Activated CD4-positive, alpha-beta memory T cell treated with anti-CD3 and anti-CD28 coated beads, Interleukin-2, amount 10 ng/mL, durations not matched to agents 7 days and 5 days (primary cell): ENCODE measurements at regions of chr9 and their contacts with region 1.

Region 1: GRCh38 chr9:127734747-127735529 is at the start of gene TOR2A:
- DNase-seq: peak; percentile 98
- H3K4me3 Mint-ChIP-seq: peak within 1 kb of the TSS; percentile 79
- H3K27ac Mint-ChIP-seq: peak within 1 kb of the TSS; percentile 82
- H3K4me1 Mint-ChIP-seq: peaks cover 23% of the 10 kb centered on the region
- H3K27me3 Mint-ChIP-seq: no peaks in the 10 kb centered on the region
- total RNA-seq, gene TOR2A: 20.6 to 23.3 TPM

Region 2: DNA sequence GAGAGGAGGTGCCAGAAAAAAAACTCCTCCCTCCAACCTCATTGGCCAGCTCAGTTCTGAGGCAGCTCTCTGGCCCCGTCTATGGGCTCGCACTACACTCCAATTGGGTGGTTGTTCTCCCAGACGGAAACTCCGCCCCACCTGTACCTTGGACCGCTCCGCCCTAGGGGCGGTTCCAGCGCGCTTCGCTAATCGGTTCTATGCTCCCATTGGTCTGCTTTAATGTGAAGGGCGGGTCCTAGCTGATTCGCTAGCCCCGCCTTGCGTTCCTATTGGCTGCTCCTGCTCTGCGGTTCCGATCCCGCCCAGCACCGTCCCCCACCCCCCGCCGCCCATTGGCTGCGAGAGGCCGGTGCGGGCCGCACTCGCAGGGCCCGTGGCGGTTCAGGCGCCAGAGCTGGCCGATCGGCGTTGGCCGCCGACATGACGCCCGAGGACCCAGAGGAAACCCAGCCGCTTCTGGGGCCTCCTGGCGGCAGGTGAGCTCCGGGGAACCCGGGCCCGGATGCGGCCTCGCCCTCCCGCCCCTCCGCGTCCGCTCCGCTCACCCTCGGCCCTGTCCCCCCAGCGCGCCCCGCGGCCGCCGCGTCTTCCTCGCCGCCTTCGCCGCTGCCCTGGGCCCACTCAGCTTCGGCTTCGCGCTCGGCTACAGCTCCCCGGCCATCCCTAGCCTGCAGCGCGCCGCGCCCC is 338.0 kb before region 1 on chr9 and contains the start of gene SLC2A8:
- CTCF ChIA-PET with region 1: interaction called, 11 read pairs
- POLR2A ChIA-PET with region 1: no interaction called
- DNase-seq: peak; percentile 98
- H3K4me3 Mint-ChIP-seq: peak within 1 kb of the TSS; percentile 67
- H3K27ac Mint-ChIP-seq: no peak within 1 kb of the TSS
- H3K4me1 Mint-ChIP-seq: peaks cover 18% of the 10 kb centered on the region
- H3K27me3 Mint-ChIP-seq: peaks cover 37% of the 10 kb centered on the region
- total RNA-seq, gene SLC2A8: 7.5 to 7.7 TPM

Region 3: DNA sequence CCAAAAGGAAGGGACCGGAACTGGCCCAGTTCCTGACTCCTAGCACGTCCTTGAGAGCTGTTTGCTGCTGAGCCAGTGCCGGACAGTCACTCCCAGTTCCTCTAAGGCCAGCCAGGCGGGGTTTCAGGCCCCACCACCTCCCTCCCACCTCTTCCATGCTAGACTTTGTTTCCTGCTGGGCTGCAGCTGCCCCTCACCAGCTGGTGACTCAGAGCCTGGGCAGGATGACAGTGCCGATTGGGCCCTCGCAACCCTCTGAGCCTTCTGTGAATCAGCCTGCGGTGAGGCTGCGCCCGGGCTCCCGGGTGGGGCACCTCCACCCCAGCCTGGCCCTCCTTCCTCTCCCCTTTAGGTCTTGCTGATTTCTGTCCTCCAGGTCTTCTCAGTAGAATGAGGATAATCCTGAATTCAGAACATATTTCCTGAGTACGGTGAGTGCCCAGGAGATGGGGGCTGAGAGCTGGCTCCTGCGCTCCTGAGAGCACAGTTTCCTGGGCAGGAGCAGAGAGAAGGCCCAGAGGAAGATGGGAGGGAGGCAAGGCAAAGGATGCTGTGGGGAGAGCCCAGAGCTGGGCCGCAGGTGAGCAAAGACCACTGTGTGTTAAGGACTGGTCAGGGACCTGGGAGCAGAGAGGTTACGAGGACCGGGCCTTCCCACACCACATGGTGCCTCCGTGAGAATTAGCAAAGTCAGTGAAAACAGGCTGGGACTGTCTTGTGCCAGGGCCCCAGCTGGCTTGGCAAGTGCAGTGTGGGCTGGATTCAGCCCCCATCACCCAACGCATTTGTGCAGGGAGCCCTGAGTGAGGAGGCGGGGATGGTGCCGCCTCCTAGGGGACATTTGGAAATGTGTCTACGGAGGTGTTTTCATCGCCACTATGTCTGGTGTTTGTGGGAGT is 155.7 kb before region 1 on chr9:
- CTCF ChIA-PET with region 1: interaction called, 11 read pairs
- POLR2A ChIA-PET with region 1: no interaction called
- DNase-seq: peak; percentile 88
- H3K4me3 Mint-ChIP-seq: peak overlapping the region; percentile 82
- H3K27ac Mint-ChIP-seq: peak overlapping the region; percentile 92
- H3K4me1 Mint-ChIP-seq: peaks cover 65% of the 10 kb centered on the region
- H3K27me3 Mint-ChIP-seq: no peaks in the 10 kb centered on the region

Region 4: DNA sequence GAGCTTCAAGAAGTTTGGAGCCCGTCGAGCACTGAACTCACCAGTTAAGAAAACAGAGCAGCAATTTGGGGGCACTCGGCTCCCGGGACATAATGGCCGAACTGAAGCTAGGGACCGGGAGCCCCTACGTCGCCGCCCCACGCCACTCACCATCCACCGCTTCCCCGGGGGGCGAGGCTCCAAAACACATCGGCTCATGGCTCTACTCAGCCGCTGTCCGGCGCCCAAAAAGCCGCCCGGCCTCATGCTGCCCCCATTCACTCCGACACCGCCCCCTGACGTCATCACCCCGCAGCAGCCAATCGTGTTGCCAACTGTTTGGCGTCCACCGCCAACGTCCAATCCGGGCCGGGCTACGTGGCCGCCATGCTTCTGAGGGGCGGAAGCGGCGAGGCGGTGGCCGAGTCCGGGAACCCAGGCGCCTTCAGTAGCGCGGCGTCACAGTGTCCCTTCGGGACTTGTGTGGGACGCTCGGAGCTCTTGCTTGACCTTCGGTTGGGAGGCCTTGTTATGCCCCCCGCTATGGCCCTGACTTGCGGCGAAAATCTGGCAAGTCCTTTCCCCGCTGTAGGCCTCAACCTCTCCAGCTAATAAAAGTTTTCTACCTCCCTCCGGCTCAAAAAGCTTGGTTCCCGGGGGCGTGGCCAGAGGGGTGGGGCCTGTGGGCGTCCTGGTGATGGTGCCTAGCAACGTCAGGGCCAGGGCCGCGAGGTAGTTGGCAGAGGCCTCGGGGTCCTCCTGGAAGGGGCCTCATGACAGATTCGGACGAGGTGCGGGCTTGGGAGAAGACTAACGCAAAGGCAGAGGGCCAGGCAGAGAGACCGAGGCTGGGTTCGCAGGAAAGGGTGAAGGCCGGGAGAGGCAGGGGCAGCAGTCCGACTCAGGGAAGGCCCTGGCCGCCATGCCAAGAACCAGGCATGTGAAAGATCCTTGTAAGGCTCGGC is 19.3 kb before region 1 on chr9 and contains the starts of genes PTRH1 and TTC16:
- CTCF ChIA-PET with region 1: interaction called, 28 read pairs
- POLR2A ChIA-PET with region 1: interaction called, 23 read pairs
- DNase-seq: peak; percentile 97
- H3K4me3 Mint-ChIP-seq: peak within 1 kb of the TSS; percentile 99
- H3K27ac Mint-ChIP-seq: peak within 1 kb of the TSS; percentile 90
- H3K4me1 Mint-ChIP-seq: peaks cover 42% of the 10 kb centered on the region
- H3K27me3 Mint-ChIP-seq: no peaks in the 10 kb centered on the region
- total RNA-seq, gene PTRH1: 10.5 to 12.0 TPM
- total RNA-seq, gene TTC16: 5.0 to 5.2 TPM

Region 5: DNA sequence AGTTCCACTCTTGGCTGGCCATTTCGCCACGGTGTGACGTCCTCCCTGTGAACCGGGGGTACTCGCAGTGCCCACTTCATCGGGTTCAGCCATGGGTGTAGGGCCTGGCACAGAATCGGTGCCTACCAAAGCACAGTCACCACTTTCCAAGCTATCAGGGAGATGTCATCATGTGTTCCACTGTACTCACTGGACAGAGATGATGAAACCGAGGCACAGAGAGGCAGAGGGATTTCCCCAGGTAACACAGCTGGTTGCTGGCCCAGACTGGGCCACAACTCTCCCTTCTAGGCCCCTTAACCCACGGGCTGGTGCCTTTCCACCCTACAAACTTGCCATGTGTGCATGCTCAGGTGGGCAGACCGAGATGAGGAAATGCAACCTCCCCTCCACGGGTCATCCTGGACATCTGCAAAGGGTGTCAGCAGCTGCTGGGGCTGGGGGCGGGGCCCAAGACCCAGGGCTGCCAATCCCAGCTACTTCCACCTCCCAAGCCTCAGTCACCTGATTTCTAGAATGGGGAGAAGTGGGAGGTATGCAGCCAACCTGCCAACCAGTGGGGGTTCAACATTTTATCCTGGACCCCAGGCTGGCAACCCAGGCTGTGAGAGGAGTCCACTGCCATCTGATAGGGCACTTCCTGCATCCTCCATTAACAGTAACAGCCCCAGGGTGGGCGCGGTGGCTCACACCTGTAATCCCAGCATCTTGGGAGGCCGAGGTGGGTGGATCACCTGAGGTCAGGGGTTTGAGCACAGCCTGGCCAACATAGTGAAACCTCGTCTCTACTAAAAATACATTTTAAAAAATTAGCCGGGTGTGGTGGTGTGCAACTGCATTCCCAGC is 44.4 kb after region 1 on chr9:
- CTCF ChIA-PET with region 1: interaction called, 36 read pairs
- POLR2A ChIA-PET with region 1: interaction called, 19 read pairs
- DNase-seq: peak; percentile 69
- H3K4me3 Mint-ChIP-seq: peak overlapping the region; percentile 100
- H3K27ac Mint-ChIP-seq: peak overlapping the region; percentile 99
- H3K4me1 Mint-ChIP-seq: peaks cover 67% of the 10 kb centered on the region
- H3K27me3 Mint-ChIP-seq: no peaks in the 10 kb centered on the region

Region 6: GRCh38 chr9:127869310-127870152 is 134.6 kb after region 1 on chr9:
- CTCF ChIA-PET with region 1: interaction called, 49 read pairs
- POLR2A ChIA-PET with region 1: interaction called, 6 read pairs
- DNase-seq: peak; percentile 83
- H3K4me3 Mint-ChIP-seq: no peak overlapping the region
- H3K27ac Mint-ChIP-seq: no peak overlapping the region
- H3K4me1 Mint-ChIP-seq: peaks cover 17% of the 10 kb centered on the region
- H3K27me3 Mint-ChIP-seq: no peaks in the 10 kb centered on the region

Region 7: DNA sequence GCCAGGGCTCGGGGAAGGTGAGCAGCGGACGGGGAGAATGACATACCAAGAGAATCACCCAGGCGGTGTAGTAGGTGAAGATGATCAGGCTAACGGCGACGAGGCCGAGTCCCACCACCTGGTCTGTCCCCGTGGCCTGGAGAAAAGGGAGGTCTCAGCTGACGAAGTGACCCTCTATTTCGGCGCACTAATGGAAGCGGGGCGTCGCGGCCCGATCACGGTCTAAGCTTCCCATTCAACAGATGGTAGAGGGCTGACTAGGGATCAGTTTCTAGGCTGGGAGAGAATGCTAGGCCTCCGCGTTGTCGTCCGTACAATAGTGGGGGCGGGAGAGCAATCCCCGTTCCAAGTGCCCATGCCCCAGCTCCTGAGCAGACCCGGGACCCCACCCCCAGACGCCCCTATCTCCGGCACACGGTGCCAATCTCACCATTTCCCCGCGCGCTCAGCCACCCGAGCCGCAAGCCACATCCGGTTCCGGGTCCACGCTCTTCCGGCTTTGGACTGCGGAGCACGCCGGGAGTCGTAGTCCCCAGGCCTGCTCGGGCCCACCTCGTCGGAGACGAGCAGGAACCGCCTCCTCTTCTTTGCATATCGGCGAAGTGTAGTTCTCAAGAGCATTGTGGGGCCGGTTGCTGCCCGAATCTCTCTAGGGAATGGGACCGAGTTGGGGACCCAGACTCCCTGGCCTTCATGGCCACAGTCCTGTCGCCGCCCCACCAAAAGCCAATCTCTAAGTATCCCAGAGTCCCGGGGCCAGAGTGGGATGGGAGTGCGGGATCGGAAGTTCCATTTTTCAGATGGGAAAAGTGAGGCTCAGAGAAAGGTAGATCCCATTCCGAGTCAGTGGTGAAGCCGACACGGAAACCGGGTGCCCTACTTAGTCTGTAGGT is 202.7 kb after region 1 on chr9 and contains the start of gene DPM2:
- CTCF ChIA-PET with region 1: no interaction called
- POLR2A ChIA-PET with region 1: no interaction called
- DNase-seq: peak; percentile 89
- H3K4me3 Mint-ChIP-seq: peak within 1 kb of the TSS; percentile 86
- H3K27ac Mint-ChIP-seq: peak within 1 kb of the TSS; percentile 82
- H3K4me1 Mint-ChIP-seq: peaks cover 42% of the 10 kb centered on the region
- H3K27me3 Mint-ChIP-seq: no peaks in the 10 kb centered on the region
- total RNA-seq, gene DPM2: 48.2 TPM

Region 8: GRCh38 chr9:128103589-128103962 is 368.6 kb after region 1 on chr9:
- CTCF ChIA-PET with region 1: no interaction called
- POLR2A ChIA-PET with region 1: no interaction called
- DNase-seq: peak; percentile 38
- H3K4me3 Mint-ChIP-seq: no peak overlapping the region
- H3K27ac Mint-ChIP-seq: peak overlapping the region; percentile 66
- H3K4me1 Mint-ChIP-seq: peaks cover 49% of the 10 kb centered on the region
- H3K27me3 Mint-ChIP-seq: no peaks in the 10 kb centered on the region